Posterior vena cava (tissue), 2 donors: ENCODE measurements at regions of chr10 and their contacts with region 1.

Region 1: GRCh38 chr10:101782811-101783735 is at the start of gene NPM3:
- DNase-seq: peak; percentile 95
- total RNA-seq, gene NPM3: 19.1 to 21.1 TPM

Region 2: GRCh38 chr10:101602761-101603398 is 180.2 kb before region 1 on chr10:
- intact Hi-C with region 1: loop called in 1 of 2 experiments (anchors 10 kb)
- DNase-seq: peak; percentile 88

Region 3: DNA sequence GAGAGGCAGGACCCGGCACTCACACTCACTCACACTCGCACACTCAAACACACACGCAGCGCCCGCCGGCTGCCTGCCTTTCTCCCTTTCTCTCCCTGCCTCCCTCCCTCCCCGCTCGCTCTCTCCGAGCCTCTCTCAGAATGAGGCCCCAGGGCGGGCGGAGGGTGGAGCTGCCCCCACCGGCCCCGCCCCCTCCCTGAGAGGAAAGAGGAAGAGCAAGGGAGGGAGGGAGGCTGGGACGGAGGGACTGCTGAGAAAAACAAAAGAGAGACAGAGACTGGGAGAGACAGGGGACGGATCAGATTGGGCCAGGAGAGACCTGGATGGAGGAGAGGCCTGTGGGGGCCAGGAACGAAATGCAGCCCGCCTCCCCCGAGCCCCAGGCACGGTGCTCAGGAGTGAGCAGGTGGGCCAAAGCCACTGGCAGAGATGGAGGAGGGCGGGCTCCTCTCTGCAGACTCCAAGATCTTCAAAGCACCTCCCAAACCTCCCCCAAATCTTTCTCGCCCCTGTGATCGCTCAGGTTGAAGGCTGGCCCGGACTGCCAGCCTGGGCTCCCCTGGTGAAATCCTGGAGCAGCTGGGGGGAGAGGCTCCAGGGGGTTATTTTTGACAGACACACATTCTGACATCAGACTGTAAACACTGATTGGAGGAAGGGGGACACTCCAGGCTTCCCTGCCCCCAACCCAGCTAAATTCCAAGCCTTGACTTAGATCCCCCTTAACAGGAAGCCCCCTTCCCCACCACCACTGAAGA is 332.0 kb after region 1 on chr10:
- intact Hi-C with region 1: no loop called
- DNase-seq: peak; percentile 96